Activated CD8-positive, alpha-beta T cell treated with anti-CD3 and anti-CD28 coated beads for 36 hours (primary cell): ENCODE measurements at regions of chr6 and their contacts with region 1.

Region 1: DNA sequence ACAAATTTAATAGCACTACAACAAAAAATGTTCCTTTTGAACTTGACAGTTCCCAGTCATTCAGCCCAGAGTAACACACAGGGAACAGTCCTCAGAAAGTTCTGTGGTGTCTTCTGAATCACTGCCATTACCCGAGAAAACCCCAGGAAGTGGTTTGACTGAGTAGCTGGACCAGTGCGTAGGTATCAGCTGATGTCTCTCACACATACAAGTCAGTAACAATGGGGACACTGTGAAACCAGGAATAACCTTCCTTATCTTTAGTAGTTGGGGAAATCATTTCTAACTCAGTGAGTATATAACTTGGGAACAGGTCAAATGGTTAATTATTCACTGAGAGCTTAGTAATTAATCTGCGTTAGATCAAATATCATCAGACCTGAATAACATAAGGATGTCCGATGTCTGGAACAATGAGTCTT is 73.1 kb downstream of the HIVEP2 start:
- DNase-seq: peak; percentile 79
- ATAC-seq: peak; percentile 91
- H3K4me3 Mint-ChIP-seq: peak overlapping the region; percentile 43
- H3K27ac Mint-ChIP-seq: peak overlapping the region; percentile 75
- H3K4me1 Mint-ChIP-seq: peaks cover 87% of the 10 kb centered on the region
- H3K27me3 Mint-ChIP-seq: no peaks in the 10 kb centered on the region
- CTCF ChIP-seq: no peak

Region 2: DNA sequence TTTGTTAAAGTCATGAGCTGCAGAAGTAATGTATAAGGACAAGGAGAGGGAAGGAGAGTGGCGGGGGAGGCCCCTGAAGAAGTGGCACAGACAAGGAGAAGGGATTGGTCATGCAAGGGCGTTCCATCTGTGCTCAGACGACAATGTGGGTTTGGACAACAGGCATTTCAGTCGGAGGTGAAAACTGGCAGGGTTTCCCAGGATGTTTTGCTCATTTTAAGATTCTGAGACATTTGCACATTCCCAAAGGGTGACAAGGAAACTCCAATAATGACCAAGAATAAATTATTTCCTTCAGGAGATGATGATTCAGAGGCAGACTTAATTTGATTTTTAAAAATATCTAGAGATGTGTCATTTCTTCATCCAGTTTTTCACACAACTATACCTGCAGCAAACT is 108.7 kb before region 1 on chr6:
- CTCF ChIA-PET with region 1: no interaction called
- POLR2A ChIA-PET with region 1: no interaction called
- intact Hi-C with region 1: no loop called
- DNase-seq: no peak
- ATAC-seq: no peak
- H3K4me3 Mint-ChIP-seq: no peak overlapping the region
- H3K27ac Mint-ChIP-seq: peak overlapping the region; percentile 27
- H3K4me1 Mint-ChIP-seq: peaks cover 48% of the 10 kb centered on the region
- H3K27me3 Mint-ChIP-seq: no peaks in the 10 kb centered on the region
- CTCF ChIP-seq: no peak

Region 3: DNA sequence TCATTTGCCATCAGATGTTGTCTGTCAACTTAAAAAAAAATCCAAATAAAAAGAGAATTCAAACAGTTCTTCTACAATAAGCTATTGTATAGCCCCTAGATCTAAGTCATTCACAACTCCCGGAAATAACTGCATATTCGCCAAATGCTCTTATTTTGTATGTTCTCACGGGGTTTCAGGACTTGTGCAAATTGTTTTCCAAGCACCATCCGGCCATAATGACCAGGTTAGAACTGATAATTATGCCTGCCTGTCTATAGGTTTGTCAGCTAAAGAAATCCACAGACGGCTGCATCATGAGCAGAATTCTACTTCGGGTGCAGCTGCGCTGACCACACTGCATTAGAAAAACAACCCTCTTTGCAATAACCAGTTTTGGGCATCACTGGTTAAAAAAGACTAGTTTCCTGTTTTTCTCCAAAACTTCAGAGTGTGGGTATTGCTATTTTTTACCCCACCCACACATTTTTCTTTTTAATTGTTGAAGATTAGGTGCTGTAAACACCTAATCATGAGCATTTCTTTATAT is 14.6 kb before region 1 on chr6:
- CTCF ChIA-PET with region 1: interaction called, 9 read pairs
- POLR2A ChIA-PET with region 1: interaction called, 7 read pairs
- intact Hi-C with region 1: loop called (anchors 2 kb)
- DNase-seq: peak; percentile 37
- ATAC-seq: peak; percentile 7
- H3K4me3 Mint-ChIP-seq: peak overlapping the region; percentile 69
- H3K27ac Mint-ChIP-seq: peak overlapping the region; percentile 85
- H3K4me1 Mint-ChIP-seq: peaks cover 90% of the 10 kb centered on the region
- H3K27me3 Mint-ChIP-seq: no peaks in the 10 kb centered on the region
- CTCF ChIP-seq: no peak